ENCODE measurements at regions of chr11 and their contacts with region 1.

Region 1: DNA sequence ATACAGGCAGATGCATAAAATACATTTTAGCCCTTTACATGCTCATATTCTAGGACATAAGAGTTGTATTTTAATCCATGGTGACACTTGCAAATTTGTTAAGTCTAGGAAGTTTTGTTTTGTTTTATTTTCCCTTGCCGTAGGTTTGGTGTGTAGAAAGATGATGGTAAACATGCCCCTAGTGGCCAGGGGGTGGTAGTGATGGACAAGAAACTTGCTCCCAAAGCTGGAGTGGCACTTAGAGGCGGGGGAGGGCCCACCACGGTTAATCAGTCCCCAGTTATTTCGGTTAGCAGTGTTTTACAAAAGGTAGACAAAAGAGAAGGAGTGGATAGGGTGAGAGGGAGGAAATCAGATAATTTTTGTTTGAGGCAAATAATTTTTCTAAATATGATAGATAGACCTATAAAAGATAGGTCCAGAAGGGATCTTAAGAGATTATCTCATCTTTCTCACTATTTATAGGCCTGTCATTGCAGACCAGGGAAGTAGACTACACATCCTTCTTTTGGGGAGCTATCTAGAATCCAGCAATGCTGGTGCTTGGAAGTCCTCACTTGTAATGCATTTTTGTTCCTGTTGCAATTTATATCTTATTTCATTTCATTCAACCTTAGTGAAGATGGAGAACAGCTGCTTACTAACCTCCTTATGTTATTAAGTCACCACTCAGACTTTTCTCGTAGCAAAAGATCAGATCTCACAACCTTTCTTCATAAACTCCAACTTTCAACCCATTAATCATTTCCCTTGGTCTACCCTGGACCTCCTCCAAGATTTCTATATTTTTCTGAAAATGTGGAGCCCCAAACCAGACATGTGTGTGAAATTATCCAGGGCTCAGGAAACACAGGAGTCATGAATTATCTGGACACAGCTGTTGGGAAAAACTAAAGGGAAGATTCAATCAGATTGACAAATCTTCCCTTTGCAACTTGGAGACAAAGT is 5.9 kb upstream of the BDNF start:
- DNase-seq: no peak
- ATAC-seq: no peak
- H3K4me3 ChIP-seq: no peak overlapping the region
- H3K27ac ChIP-seq: no peak overlapping the region
- H3K4me1 ChIP-seq: peaks cover 0 to 9% (median 5%) of the 10 kb centered on the region in 12 donors
- H3K27me3 ChIP-seq: peaks cover 0 to 25% (median 0%) of the 10 kb centered on the region in 9 donors
- CTCF ChIP-seq: peak; percentile 39 to 69 (median 54)
- POLR2A ChIP-seq: no peak

Region 2: DNA sequence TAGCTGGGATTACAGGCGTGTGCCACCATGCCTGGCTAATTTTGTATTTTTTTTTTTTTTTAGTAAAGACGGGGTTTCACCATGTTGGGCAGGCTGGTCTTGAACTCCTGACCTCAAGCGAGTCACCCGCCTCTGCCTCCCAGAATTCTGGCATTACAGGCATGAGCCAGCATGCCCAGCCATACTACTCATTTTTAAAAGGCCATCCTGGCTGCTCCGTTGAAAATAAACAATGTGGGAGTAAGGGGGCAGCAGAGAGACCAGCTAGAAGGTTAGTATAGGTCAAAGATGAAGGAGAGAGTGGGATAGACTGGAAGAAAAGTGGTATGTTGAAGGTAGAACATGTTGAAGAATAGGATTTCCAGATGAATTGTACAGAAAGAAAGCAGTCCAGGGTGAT is 182.0 kb before region 1 on chr11:
- intact Hi-C with region 1: loop called in 1 of 10 experiments (anchors 10 kb)
- DNase-seq: no peak
- ATAC-seq: no peak
- H3K4me3 ChIP-seq: no peak overlapping the region
- H3K27ac ChIP-seq: no peak overlapping the region
- H3K4me1 ChIP-seq: peaks cover 0 to 17% (median 1%) of the 10 kb centered on the region in 12 donors
- H3K27me3 ChIP-seq: no peaks in the 10 kb centered on the region
- CTCF ChIP-seq: peak in 4 of 12 donors; percentile 10 to 22 (median 18)
- POLR2A ChIP-seq: no peak

Region 3: DNA sequence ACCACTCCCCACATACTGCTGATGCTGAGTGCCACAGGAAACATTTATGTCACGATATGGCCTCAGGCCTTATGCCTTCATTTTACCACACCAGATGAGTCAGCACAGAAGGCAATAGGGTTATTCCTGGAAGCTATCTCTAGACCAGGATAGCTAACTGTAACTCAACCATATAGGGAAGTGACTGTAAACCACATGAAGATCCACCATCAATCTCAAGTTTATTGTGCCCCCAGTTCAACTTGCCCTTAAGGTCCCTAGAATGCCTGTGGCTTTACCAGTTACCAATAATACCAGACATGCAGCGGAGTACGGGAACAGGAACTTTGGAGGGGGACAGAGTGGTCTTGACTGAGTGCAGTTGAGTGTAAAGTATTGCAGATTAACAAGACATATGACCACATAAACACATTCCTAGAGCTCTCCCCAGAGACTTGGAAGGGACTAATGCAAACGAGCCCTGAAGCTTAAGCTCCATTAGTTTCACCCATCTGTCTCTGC is 220.9 kb after region 1 on chr11:
- intact Hi-C with region 1: no loop called
- DNase-seq: no peak
- ATAC-seq: no peak
- H3K4me3 ChIP-seq: no peak overlapping the region
- H3K27ac ChIP-seq: no peak overlapping the region
- H3K4me1 ChIP-seq: no peaks in the 10 kb centered on the region
- H3K27me3 ChIP-seq: no peaks in the 10 kb centered on the region
- CTCF ChIP-seq: no peak
- POLR2A ChIP-seq: no peak

Region 4: DNA sequence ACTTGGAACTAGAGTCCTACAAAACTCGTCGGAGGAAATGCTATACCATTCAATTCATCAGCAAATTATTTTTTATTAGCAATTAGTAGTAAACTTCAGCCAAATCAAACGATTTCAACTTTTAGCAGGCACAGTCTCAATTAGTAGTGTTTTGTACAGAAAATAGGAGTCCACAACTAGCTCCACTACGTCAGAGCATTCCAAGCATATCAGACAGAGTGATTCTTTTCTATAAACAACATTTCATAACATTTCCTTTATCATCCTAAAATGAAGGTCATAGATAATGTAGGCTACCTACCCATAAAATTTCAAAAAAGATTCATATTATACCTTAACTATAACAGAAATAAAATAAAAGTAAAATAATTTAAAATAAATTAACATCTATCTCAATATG is 231.9 kb after region 1 on chr11:
- intact Hi-C with region 1: no loop called
- DNase-seq: no peak
- ATAC-seq: no peak
- H3K4me3 ChIP-seq: no peak overlapping the region
- H3K27ac ChIP-seq: no peak overlapping the region
- H3K4me1 ChIP-seq: no peaks in the 10 kb centered on the region
- H3K27me3 ChIP-seq: no peaks in the 10 kb centered on the region
- CTCF ChIP-seq: no peak
- POLR2A ChIP-seq: no peak

Measured in heart left ventricle (tissue), 16 donors.